Right lobe of liver (tissue), 6 donors: ENCODE measurements at regions of chr9 and their contacts with region 1.

Region 1: DNA sequence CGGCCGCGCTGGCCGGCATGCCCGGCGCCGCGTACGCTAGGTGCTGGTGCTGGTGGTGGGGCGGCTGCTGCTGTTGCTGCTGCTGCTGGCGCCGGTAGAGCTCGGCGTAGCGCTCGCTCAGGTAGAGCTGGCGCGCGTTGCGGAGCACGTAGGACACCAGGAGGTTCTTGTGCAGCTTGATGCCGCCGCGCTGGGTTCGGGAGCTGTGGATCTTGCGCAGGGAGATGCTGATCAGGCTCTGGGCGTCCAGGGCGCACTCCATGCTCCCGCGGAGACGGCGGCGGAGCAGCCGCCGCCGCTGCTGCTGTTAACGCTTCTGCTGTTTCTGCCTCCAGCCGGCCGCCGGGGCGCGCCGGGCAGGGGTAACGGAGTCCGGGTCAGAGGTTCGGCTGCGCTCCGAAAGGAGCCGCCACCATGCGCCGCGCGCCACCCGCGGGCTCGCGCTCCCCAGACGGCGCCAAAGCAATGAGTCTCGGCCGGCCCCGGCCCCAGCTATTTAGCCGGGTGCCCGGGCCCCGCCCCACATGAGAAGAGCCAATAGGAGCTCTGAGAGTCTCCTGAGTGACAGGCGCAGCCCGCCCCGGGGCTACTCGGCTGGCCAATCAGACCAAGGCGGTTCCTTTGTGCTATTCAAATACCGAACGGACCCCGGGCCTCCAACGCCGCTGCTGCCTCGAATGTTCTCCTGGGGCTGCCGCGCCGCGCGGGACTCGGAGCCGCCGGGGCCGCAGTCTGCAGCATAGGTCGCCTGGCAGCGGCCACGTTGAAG is at the start of gene IER5L:
- DNase-seq: peak; percentile 96
- ATAC-seq: peak; percentile 66 to 86 (median 79)
- H3K4me3 ChIP-seq: peak within 1 kb of the TSS; percentile 65 to 99 (median 82)
- H3K27ac ChIP-seq: peak within 1 kb of the TSS; percentile 87 to 99 (median 97)
- H3K4me1 ChIP-seq: peaks cover 0 to 15% (median 0%) of the 10 kb centered on the region in 4 donors
- H3K27me3 ChIP-seq: no peaks in the 10 kb centered on the region
- CTCF ChIP-seq: no peak
- POLR2A ChIP-seq: peak; percentile 98
- total RNA-seq, gene IER5L: 2.7 to 19.8 (median 7.8) TPM

Region 2: GRCh38 chr9:129139993-129140396 is 38.0 kb before region 1 on chr9:
- intact Hi-C with region 1: loop called in 1 of 2 experiments (anchors 5 kb)
- DNase-seq: peak; percentile 83 to 89 (median 87)
- ATAC-seq: peak; percentile 59 to 68 (median 64)
- H3K4me3 ChIP-seq: peak overlapping the region; percentile 53 to 68 (median 56)
- H3K27ac ChIP-seq: peak overlapping the region; percentile 95 to 100 (median 99)
- H3K4me1 ChIP-seq: peaks cover 0 to 62% (median 33%) of the 10 kb centered on the region in 4 donors
- H3K27me3 ChIP-seq: no peaks in the 10 kb centered on the region
- CTCF ChIP-seq: no peak
- POLR2A ChIP-seq: peak; percentile 87

Region 3: GRCh38 chr9:129320575-129321263 is 142.7 kb after region 1 on chr9:
- intact Hi-C with region 1: loop called in 1 of 2 experiments (anchors 5 kb)
- DNase-seq: peak in 2 of 3 donors; percentile 62 to 73
- ATAC-seq: peak; percentile 59 to 66 (median 64)
- H3K4me3 ChIP-seq: peak overlapping the region; percentile 26 to 35 (median 33)
- H3K27ac ChIP-seq: peak overlapping the region; percentile 72 to 89 (median 73)
- H3K4me1 ChIP-seq: peaks cover 4 to 62% (median 23%) of the 10 kb centered on the region in 4 donors
- H3K27me3 ChIP-seq: no peaks in the 10 kb centered on the region
- CTCF ChIP-seq: peak in 2 of 4 donors; percentile 12 to 18
- POLR2A ChIP-seq: peak; percentile 75

Region 4: GRCh38 chr9:129482521-129483414 is 304.8 kb after region 1 on chr9:
- intact Hi-C with region 1: loop called (anchors 5 to 10 kb)
- DNase-seq: peak; percentile 85 to 91 (median 87)
- ATAC-seq: peak; percentile 40 to 72 (median 66)
- H3K4me3 ChIP-seq: peak overlapping the region; percentile 20 to 58 (median 49)
- H3K27ac ChIP-seq: peak overlapping the region; percentile 99 to 100 (median 99)
- H3K4me1 ChIP-seq: peaks cover 5 to 43% (median 23%) of the 10 kb centered on the region in 4 donors
- H3K27me3 ChIP-seq: no peaks in the 10 kb centered on the region
- CTCF ChIP-seq: no peak
- POLR2A ChIP-seq: peak; percentile 71

Region 5: GRCh38 chr9:129487642-129488409 is 309.9 kb after region 1 on chr9:
- intact Hi-C with region 1: loop called (anchors 5 to 10 kb)
- DNase-seq: peak in 2 of 3 donors; percentile 68 to 76
- ATAC-seq: peak in 3 of 4 donors; percentile 4 to 11 (median 7)
- H3K4me3 ChIP-seq: peak overlapping the region; percentile 20 to 64 (median 61)
- H3K27ac ChIP-seq: peak overlapping the region; percentile 96 to 99 (median 99)
- H3K4me1 ChIP-seq: peaks cover 5 to 58% (median 33%) of the 10 kb centered on the region in 4 donors
- H3K27me3 ChIP-seq: no peaks in the 10 kb centered on the region
- CTCF ChIP-seq: no peak
- POLR2A ChIP-seq: no peak

Region 6: DNA sequence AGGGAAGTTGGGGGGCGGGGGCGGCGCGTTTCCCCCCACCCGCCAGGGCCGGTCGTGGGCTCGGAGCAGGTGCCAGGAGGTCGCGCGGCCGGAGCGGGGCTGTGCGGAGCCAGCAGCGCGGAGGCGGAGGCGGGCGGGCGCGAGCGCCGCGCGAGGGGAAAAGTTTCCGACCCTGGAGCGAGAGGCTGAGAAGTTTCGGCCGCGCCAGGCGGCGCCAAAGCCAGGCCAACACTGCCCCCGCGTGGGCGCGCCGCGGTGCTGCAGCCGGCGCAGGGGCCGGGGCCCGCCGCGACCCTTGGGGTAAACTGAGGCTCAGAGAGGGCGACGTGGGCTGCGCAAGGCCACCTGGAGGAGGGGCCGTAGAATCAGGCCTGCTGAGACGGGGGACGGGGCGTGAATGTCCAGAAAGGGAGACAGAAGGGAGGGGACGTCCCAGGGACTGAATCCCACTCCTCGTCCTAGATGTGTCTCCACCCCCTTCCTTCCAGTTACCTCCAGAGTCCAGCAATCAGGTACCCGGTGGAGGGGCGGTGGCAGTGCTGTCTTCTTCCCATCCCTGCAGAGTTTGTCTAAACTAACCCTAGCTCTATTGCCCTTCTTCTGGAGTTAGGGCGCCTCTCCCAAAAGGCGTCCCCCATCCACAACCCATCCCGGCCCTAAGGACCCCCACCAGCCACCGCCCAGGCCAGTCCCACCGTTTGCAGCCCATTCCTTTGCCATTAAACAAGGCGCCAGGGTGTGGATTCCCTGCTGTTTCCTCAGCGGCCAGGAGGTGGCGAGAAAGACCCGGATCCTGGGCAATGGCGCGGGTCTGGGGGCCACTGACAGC is 432.7 kb after region 1 on chr9:
- intact Hi-C with region 1: loop called in 1 of 2 experiments (anchors 10 kb)
- DNase-seq: peak; percentile 79 to 83 (median 80)
- ATAC-seq: peak; percentile 37 to 71 (median 68)
- H3K4me3 ChIP-seq: peak overlapping the region; percentile 49 to 59 (median 52)
- H3K27ac ChIP-seq: peak overlapping the region; percentile 69 to 94 (median 83)
- H3K4me1 ChIP-seq: peaks cover 0 to 29% (median 10%) of the 10 kb centered on the region in 4 donors
- H3K27me3 ChIP-seq: no peaks in the 10 kb centered on the region
- CTCF ChIP-seq: peak; percentile 87 to 100 (median 92)
- POLR2A ChIP-seq: peak; percentile 30

Region 7: DNA sequence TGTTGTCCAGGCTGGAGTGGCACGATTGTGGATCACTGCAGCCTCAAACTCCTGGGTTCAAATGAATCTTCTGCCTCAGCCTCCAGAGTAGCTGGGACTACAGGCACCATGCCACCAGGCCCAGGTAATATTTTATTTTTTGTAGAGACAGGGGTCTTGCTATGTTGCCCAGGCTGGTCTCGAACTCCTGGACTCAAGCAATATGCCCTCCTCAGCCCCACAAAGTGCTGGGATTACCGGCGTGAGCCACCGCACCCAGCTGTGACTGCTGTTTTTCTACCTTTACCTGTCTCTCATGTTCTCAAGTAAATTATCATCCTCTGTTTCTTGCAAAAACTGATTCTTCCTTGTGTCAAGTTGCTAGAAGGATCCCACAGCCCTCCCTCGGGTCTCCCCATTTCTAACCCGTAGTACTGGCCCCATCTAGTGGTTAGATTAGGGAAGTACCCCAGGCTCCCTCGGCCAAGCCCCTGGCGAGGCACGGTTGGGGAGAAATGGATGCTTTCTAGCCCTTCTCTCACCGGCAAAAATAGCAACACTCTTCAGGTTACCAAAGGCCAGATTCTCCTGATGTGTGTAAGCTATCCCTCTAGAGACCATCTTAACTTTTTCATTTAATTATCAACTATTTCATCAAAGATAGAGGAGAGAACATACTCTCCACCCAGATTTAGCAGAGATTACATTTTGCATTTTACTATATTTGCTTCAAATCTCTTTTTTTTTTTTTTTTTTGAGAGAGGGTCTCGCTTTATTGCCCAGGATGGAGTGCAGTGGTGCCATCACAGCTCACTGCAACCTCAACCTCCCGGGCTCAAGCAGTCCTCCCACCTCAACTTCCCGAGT is 605.8 kb after region 1 on chr9:
- intact Hi-C with region 1: no loop called
- DNase-seq: peak in 2 of 3 donors; percentile 51 to 66
- ATAC-seq: peak; percentile 96 to 100 (median 96)
- H3K4me3 ChIP-seq: no peak overlapping the region
- H3K27ac ChIP-seq: no peak overlapping the region
- H3K4me1 ChIP-seq: no peaks in the 10 kb centered on the region
- H3K27me3 ChIP-seq: no peaks in the 10 kb centered on the region
- CTCF ChIP-seq: peak; percentile 89 to 94 (median 92)
- POLR2A ChIP-seq: no peak